ENCODE measurements at regions of chr12 and their contacts with region 1.

Region 1: DNA sequence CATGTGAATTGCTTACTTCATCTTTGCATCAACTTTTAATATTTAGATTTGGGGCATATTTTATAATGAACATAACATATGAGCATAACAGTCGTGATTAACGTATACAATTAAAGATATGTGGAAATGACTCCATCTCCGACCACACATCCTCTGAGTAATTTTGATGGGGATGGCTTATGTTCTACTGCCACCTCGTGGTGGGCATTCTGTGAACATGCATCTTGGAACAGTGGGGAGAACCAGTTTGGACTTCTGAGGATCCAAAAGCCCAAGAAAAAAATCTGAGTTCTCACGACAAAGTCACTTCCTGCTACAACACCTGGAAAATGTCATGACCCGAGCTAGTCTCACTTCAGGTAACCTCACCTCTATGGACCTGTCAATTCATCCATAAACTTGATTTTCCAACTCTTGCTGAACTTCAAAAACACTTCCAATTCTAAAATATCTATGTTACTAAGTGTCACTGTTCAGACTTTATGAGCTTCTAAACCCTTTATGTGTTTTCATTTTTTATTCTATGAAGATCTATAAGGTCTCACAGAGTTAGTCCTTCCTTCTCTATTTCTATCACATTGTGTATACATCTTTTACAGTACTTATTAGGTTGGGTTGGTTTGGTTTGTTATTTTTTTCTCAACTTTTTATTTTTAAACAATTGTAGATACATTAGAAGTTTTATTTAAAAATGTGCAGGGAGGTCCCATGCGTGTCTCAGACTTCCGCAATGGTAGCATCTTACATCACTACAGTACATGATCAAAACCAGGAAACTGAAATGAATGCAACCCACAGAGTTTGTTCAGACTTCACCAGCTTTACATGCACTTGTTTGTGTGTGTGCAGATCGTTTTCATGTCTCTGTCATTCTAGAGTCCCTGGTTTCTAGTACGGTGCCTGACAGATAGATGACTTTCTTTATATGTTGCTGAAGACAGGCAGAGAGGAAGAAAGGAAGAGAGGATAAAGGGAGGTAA is 38.2 kb upstream of the STAB2 start:
- DNase-seq: peak; percentile 64 to 77 (median 70)
- ATAC-seq: no peak
- H3K4me3 ChIP-seq: no peak overlapping the region
- H3K27ac ChIP-seq: no peak overlapping the region
- H3K4me1 ChIP-seq: no peaks in the 10 kb centered on the region
- H3K27me3 ChIP-seq: peaks cover 0 to 4% of the 10 kb centered on the region in 2 donors
- CTCF ChIP-seq: peak; percentile 59 to 90 (median 85)
- POLR2A ChIP-seq: no peak

Region 2: GRCh38 chr12:102740141-102740955 is 808.6 kb before region 1 on chr12:
- intact Hi-C with region 1: no loop called
- DNase-seq: no peak
- ATAC-seq: no peak
- H3K4me3 ChIP-seq: no peak overlapping the region
- H3K27ac ChIP-seq: no peak overlapping the region
- H3K4me1 ChIP-seq: no peaks in the 10 kb centered on the region
- H3K27me3 ChIP-seq: no peaks in the 10 kb centered on the region
- CTCF ChIP-seq: peak in 3 of 7 experiments; percentile 10 to 20 (median 11)
- POLR2A ChIP-seq: no peak

Region 3: GRCh38 chr12:102883204-102883799 is 665.6 kb before region 1 on chr12:
- intact Hi-C with region 1: loop called (anchors 10 kb)
- DNase-seq: peak; percentile 74 to 83 (median 76)
- ATAC-seq: peak; percentile 66
- H3K4me3 ChIP-seq: no peak overlapping the region
- H3K27ac ChIP-seq: no peak overlapping the region
- H3K4me1 ChIP-seq: peaks cover 10% of the 10 kb centered on the region
- H3K27me3 ChIP-seq: no peaks in the 10 kb centered on the region
- CTCF ChIP-seq: peak; percentile 74 to 89 (median 86)
- POLR2A ChIP-seq: no peak

Region 4: GRCh38 chr12:102950107-102950949 is 598.6 kb before region 1 on chr12:
- intact Hi-C with region 1: loop called (anchors 5 kb)
- DNase-seq: peak in 2 of 4 donors; percentile 30 to 46
- ATAC-seq: peak; percentile 59
- H3K4me3 ChIP-seq: no peak overlapping the region
- H3K27ac ChIP-seq: no peak overlapping the region
- H3K4me1 ChIP-seq: no peaks in the 10 kb centered on the region
- H3K27me3 ChIP-seq: peaks cover 0 to 7% of the 10 kb centered on the region in 2 donors
- CTCF ChIP-seq: peak in 4 of 7 experiments; percentile 16 to 38 (median 30)
- POLR2A ChIP-seq: no peak

Region 5: GRCh38 chr12:103495479-103496456 is 53.1 kb before region 1 on chr12 and contains the start of gene C12orf42:
- intact Hi-C with region 1: no loop called
- DNase-seq: peak in 2 of 4 donors; percentile 15 to 40
- ATAC-seq: no peak
- H3K4me3 ChIP-seq: no peak within 1 kb of the TSS
- H3K27ac ChIP-seq: no peak within 1 kb of the TSS
- H3K4me1 ChIP-seq: peaks cover 7% of the 10 kb centered on the region
- H3K27me3 ChIP-seq: peaks cover 0 to 16% of the 10 kb centered on the region in 2 donors
- CTCF ChIP-seq: peak in 3 of 7 experiments; percentile 16 to 23 (median 20)
- POLR2A ChIP-seq: no peak
- total RNA-seq, gene C12orf42: not detected